PC-3 (cell line): ENCODE measurements at regions of chr3 and their contacts with region 1.

Region 1: DNA sequence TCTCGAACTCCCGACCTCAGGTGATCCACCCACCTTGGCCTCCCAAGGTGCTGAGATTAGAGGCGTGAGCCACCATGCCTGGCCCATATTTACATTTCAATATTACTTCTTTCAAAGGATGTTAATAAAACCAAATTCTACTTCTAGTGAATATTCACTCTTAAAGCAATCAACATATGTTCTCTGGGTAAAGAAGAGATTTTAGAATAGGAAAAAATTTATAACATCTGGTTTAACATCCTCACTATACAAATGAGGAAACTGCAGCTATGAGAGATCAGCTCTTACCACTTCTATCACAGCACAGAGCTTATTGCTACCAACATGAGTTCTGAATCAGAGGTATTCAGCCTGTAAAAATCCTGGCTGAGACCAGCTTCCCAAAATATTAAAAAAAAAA is 48.7 kb downstream of the IL17RD start:
- DNase-seq: no peak
- ATAC-seq: no peak
- H3K4me3 ChIP-seq: no peak overlapping the region
- H3K27ac ChIP-seq: no peak overlapping the region
- H3K4me1 ChIP-seq: no peaks in the 10 kb centered on the region
- H3K27me3 ChIP-seq: no peaks in the 10 kb centered on the region
- CTCF ChIP-seq: no peak

Region 2: GRCh38 chr3:57164657-57165573 is 48.4 kb after region 1 on chr3 and contains the start of gene IL17RD:
- CTCF ChIA-PET with region 1: no interaction called
- POLR2A ChIA-PET with region 1: interaction called, 21 read pairs
- intact Hi-C with region 1: no loop called
- DNase-seq: peak; percentile 82
- ATAC-seq: peak; percentile 80
- H3K4me3 ChIP-seq: peak within 1 kb of the TSS; percentile 87
- H3K27ac ChIP-seq: no peak within 1 kb of the TSS
- H3K4me1 ChIP-seq: peaks cover 14% of the 10 kb centered on the region
- H3K27me3 ChIP-seq: no peaks in the 10 kb centered on the region
- CTCF ChIP-seq: no peak
- total RNA-seq, gene IL17RD: 3.1 and 3.7 TPM in 2 replicates

Region 3: DNA sequence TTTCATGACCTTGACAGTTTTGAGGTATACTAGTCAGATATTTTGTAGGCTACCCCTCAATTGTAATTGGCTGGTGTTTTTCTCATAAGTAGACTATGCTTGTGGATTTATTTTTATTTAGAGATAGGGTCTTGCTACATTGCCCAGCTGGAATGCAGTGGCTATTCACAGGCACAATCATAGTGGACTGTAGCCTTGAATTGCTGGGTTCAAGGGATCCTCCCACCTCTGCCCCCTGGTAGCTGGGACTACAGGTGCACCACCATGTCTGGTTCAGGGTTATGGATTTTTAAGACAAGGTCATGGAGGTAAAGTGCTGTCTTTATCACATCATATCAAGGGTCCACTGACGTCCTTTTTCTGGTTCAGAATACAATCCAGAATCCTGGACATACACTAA is 59.5 kb after region 1 on chr3:
- CTCF ChIA-PET with region 1: no interaction called
- POLR2A ChIA-PET with region 1: no interaction called
- intact Hi-C with region 1: no loop called
- DNase-seq: no peak
- ATAC-seq: no peak
- H3K4me3 ChIP-seq: no peak overlapping the region
- H3K27ac ChIP-seq: no peak overlapping the region
- H3K4me1 ChIP-seq: no peaks in the 10 kb centered on the region
- H3K27me3 ChIP-seq: no peaks in the 10 kb centered on the region
- CTCF ChIP-seq: no peak